Ovary (tissue), 10 donors: ENCODE measurements at regions of chr20 and their contacts with region 1.

Region 1: GRCh38 chr20:8344106-8344505 is 212.0 kb downstream of the PLCB1 start:
- DNase-seq: no peak
- H3K4me3 ChIP-seq: no peak overlapping the region
- H3K27ac ChIP-seq: no peak overlapping the region
- H3K4me1 ChIP-seq: no peaks in the 10 kb centered on the region
- H3K27me3 ChIP-seq: no peaks in the 10 kb centered on the region
- CTCF ChIP-seq: no peak
- EP300 ChIP-seq: no peak
- POLR2A ChIP-seq: no peak

Region 2: DNA sequence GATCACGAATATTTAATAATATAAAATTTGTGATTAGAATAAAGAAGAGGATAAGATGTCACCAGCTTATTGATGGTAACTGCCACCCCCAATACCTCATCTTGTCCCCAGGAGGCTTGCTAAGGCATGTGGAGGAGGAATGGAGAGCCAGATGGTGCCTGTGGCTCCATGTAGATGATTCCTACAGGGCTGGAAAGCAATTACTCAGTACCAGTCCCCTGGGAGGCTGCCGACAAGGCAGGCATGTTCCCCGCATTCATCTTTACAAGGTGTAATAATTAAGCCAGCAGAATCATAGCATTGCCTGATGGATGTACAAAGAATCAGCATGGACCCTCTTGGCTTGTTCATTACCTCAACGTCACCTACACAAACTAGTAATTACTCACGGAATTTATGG is 56.8 kb before region 1 on chr20:
- intact Hi-C with region 1: loop called in 1 of 4 experiments (anchors 10 kb)
- DNase-seq: no peak
- H3K4me3 ChIP-seq: no peak overlapping the region
- H3K27ac ChIP-seq: no peak overlapping the region
- H3K4me1 ChIP-seq: no peaks in the 10 kb centered on the region
- H3K27me3 ChIP-seq: no peaks in the 10 kb centered on the region
- CTCF ChIP-seq: no peak
- EP300 ChIP-seq: no peak
- POLR2A ChIP-seq: no peak

Region 3: GRCh38 chr20:8318965-8319625 is 25.0 kb before region 1 on chr20:
- intact Hi-C with region 1: loop called in 1 of 4 experiments (anchors 1 kb)
- DNase-seq: no peak
- H3K4me3 ChIP-seq: no peak overlapping the region
- H3K27ac ChIP-seq: no peak overlapping the region
- H3K4me1 ChIP-seq: no peaks in the 10 kb centered on the region
- H3K27me3 ChIP-seq: no peaks in the 10 kb centered on the region
- CTCF ChIP-seq: no peak
- EP300 ChIP-seq: no peak
- POLR2A ChIP-seq: no peak